ENCODE measurements at regions of chr1 and their contacts with region 1.

Region 1: DNA sequence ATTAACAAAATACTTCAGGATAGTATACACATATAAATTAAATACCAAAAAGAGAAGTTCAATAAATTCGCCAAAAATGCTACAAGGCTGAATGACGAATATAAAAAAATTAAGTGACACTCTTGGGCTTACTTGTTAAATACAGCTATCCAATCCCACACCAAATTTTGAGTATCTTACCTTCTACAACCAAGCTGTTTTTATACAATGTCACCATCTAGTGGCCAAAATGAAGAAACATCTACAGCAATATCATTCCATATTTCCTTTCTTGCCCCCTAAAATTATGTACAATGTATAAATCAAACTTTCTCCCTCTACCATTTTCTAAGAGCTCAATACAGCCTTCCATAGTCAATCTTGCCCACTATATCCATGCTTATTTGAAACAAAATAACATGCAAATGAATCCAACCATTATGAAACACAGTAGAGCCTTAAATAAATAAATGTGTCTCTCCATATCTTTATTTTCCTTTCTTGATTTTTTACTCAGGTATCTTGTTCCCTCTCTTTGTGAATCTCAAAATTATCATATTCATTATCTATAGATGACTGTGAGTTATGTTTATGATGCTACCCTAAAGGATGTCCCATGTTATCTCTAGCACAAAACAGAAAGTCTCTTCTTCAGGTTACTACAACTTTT is 86.3 kb downstream of the ACBD6 start:
- DNase-seq: peak; percentile 47 to 58 (median 48)
- ATAC-seq: peak; percentile 94
- H3K4me3 ChIP-seq: no peak overlapping the region
- H3K27ac ChIP-seq: no peak overlapping the region
- H3K4me1 ChIP-seq: no peaks in the 10 kb centered on the region
- H3K27me3 ChIP-seq: no peaks in the 10 kb centered on the region
- CTCF ChIP-seq: peak; percentile 48 to 88 (median 58); a peak in 5 of 6 replicates
- EP300 ChIP-seq: no peak
- POLR2A ChIP-seq: no peak
- RAD21 ChIP-seq: peak; percentile 62 to 88

Region 2: DNA sequence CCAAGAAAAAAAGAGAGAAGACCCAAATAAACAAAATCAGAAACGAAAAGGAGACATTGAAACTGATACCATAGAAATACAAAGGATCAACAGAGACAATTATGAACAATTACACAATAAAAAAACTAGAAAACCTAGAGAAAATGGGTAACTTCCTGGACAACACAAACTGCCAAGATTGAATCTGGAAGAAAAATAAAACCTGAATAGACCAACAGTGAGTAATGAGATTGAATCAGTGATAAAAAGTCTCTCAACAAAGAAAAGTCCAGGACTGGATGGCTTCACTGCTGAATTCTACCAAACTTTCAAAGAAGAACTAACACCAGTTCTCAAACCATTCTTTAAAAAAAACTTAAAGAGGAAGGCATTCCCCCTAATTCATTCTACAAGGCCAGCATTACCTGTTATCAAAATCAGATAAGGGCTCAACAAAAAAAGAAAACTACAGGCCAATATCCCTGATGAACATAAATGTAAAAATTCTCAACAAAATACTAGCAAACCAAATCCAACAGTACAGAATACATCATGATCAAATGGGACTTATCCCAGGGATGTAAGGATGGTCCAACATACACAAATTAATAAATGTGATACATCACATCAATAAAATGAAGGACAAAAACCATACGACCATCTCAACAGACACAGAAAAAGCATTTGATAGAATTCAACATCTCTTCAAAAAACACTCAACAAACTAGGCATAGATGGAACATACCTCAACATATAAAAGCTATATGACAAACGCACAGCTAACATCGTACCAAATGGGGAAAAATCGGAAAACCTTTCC is 33.6 kb before region 1 on chr1:
- CTCF ChIA-PET with region 1: no interaction called
- POLR2A ChIA-PET with region 1: no interaction called
- in situ Hi-C with region 1: no loop called
- intact Hi-C with region 1: no loop called
- DNase-seq: no peak
- ATAC-seq: no peak
- H3K4me3 ChIP-seq: no peak overlapping the region
- H3K27ac ChIP-seq: no peak overlapping the region
- H3K4me1 ChIP-seq: no peaks in the 10 kb centered on the region
- H3K27me3 ChIP-seq: no peaks in the 10 kb centered on the region
- CTCF ChIP-seq: no peak
- EP300 ChIP-seq: no peak
- POLR2A ChIP-seq: no peak
- RAD21 ChIP-seq: no peak

Region 3: DNA sequence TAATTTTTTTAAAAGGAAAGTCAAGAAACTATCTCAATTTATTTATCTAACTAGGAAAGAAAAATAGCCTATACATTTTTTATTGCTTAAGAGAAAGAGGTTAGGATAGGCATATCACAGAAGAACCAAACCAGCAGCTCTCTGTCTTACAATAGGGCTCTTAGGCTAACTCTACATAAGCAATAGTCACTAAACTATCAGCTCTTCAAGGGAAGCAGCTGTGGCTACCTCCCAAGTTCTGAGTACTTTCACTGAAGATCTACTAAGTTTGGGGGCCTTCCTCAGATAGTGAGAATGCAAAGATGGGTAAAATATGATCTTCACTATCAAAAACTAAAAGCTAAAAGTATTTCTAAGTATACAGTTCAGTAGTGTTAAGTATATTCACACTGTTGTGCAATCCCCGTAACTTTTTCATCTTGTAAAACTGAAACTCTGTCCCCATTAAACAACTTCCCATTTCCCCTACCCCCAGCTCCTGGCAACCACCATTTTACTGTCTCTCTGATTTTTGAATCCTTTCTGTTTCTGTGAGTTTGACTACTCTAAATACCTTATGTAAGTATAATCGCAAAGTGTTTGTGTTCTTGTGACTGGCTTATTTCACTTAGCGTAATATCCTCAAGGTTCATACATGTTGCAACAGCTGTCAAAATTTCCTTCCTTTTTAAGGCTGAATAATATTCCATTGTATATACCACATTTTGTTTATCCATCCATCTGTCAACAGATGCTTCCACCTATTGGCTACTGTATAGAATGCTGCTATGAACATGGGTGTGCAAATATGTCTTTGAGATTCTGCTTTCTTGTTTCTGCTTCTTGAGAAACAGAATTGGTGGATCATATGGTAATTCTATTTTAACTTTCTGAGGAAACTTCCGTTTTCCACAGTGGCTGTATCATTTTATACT is 12.9 kb after region 1 on chr1:
- CTCF ChIA-PET with region 1: no interaction called
- POLR2A ChIA-PET with region 1: no interaction called
- in situ Hi-C with region 1: no loop called
- intact Hi-C with region 1: no loop called
- DNase-seq: no peak
- ATAC-seq: no peak; the same call in 2 of the 3 replicates
- H3K4me3 ChIP-seq: no peak overlapping the region
- H3K27ac ChIP-seq: no peak overlapping the region
- H3K4me1 ChIP-seq: no peaks in the 10 kb centered on the region
- H3K27me3 ChIP-seq: no peaks in the 10 kb centered on the region
- CTCF ChIP-seq: no peak
- EP300 ChIP-seq: no peak
- POLR2A ChIP-seq: no peak
- RAD21 ChIP-seq: no peak

Region 4: DNA sequence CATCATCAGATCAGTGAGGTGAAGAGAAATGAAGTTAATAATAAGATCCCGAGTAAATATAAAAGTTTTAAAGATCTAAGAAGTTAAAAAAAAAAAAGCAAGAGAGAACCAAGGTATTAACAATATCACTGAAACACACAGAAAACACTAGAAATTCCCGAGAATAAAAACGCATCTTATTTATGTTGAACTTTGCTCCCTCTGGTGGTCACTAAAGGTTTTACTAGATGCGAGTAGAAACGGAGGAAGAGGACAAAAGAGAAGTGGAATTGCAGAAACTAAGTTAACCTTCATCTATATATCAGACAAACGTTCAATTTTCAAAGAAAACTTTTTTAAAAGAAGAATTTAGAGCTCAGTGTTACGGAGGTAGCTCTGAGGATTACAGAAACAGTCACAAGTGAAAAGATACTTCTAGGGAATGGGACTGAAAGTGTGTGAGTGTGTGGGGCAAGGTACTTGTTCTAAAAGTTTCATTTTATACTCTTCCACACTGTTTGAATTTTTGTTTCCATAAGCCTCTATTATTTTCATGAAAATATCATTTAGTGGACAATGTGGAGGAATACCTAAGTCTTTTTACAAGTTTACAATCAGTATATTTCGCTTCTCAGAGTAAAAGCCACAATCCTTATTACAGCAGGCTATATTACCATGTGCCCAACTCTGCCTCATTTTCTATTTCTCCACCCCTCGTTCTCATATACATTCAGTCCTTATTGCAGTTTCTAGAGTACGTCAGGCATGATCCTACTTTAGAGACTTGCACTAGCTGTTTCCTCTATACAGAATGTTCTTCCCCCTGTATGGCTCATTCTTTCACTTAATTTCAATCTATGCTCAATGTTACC is 66.5 kb after region 1 on chr1:
- CTCF ChIA-PET with region 1: no interaction called
- POLR2A ChIA-PET with region 1: no interaction called
- in situ Hi-C with region 1: no loop called
- intact Hi-C with region 1: loop called (anchors 1 kb)
- DNase-seq: peak; percentile 53 to 79 (median 54)
- ATAC-seq: peak; percentile 78
- H3K4me3 ChIP-seq: no peak overlapping the region
- H3K27ac ChIP-seq: no peak overlapping the region
- H3K4me1 ChIP-seq: no peaks in the 10 kb centered on the region
- H3K27me3 ChIP-seq: no peaks in the 10 kb centered on the region
- CTCF ChIP-seq: peak; percentile 64 to 82 (median 73); a peak in 5 of 6 replicates
- EP300 ChIP-seq: no peak
- POLR2A ChIP-seq: no peak
- RAD21 ChIP-seq: peak; percentile 49 to 64; a peak in 3 of 4 replicates

Measured in K562 (cell line).